B cell (primary cell): ENCODE measurements at regions of chr17 and their contacts with region 1.

Region 1: DNA sequence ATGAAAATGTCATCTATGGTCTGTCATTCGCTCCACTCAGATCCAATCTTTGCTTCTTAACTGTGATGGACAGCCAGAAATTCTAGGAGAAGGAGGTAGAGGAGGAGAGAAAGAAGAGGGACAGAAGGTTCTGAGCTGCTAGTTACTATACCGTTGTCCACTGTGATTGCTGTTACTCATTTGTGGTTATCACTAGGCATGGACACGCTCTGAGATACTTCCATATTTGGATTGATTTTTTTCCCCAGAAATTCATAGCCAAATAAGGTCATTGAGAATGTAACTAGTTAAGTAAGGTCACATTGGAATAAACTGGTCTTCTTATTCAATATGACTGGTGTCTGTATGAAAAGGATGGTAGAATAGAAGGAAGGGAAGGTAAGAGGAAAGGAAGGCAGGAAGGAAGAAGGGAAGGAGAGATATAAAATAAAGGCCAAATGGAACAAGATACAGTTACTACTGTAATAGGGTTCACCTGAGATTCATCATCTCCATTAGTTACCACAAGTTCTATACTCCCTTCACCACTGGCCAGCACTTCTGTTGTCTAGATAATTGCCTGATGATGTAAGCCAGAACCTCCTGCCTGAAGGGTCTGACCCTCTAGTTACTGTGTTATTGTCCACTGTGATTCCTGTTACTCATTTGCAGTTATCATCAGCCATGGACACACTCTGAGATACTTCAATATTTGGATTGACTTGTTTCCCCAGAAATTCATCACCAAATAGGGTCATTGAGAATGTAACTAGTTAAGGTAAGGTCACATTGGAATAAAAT is 2.9 kb downstream of the KRTAP9-7 start:
- DNase-seq: peak; percentile 0
- ATAC-seq: no peak
- H3K4me3 ChIP-seq: no peak overlapping the region
- H3K4me3 Mint-ChIP-seq: no peak overlapping the region
- H3K27ac ChIP-seq: no peak overlapping the region
- H3K27ac Mint-ChIP-seq: no peak overlapping the region
- H3K4me1 ChIP-seq: no peaks in the 10 kb centered on the region
- H3K4me1 Mint-ChIP-seq: no peaks in the 10 kb centered on the region
- H3K27me3 ChIP-seq: peaks cover 0 to 9% (median 4%) of the 10 kb centered on the region in 4 experiments
- H3K27me3 Mint-ChIP-seq: peaks cover 51% of the 10 kb centered on the region
- CTCF ChIP-seq: no peak

Region 2: DNA sequence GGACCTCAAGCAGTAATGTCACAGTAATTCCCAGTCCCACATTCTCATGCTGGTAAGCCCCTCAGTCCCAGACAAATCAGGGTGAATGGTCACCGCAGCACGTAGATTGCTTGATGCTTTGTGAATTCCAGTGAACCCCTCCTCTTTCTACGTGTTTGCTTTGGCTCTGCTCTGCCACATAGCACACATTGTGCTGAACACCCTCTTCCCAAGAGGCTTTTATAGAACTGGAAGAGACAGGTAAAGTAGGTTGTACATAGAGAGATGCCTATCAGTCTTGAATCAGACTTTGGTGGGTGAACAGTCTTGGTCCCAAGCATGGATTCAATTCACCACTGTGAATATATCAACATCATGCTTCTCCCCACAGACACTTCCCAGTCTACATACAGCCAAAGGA is 13.8 kb before region 1 on chr17:
- CTCF ChIA-PET with region 1: no interaction called
- POLR2A ChIA-PET with region 1: no interaction called
- intact Hi-C with region 1: loop called (anchors 1 kb)
- DNase-seq: peak; percentile 0
- ATAC-seq: no peak
- H3K4me3 ChIP-seq: no peak overlapping the region
- H3K4me3 Mint-ChIP-seq: no peak overlapping the region
- H3K27ac ChIP-seq: no peak overlapping the region
- H3K27ac Mint-ChIP-seq: no peak overlapping the region
- H3K4me1 ChIP-seq: no peaks in the 10 kb centered on the region
- H3K4me1 Mint-ChIP-seq: no peaks in the 10 kb centered on the region
- H3K27me3 ChIP-seq: no peaks in the 10 kb centered on the region
- H3K27me3 Mint-ChIP-seq: peaks cover 58% of the 10 kb centered on the region
- CTCF ChIP-seq: no peak